OCI-LY7 (cell line): ENCODE measurements at regions of chr6 and their contacts with region 1.

Region 1: DNA sequence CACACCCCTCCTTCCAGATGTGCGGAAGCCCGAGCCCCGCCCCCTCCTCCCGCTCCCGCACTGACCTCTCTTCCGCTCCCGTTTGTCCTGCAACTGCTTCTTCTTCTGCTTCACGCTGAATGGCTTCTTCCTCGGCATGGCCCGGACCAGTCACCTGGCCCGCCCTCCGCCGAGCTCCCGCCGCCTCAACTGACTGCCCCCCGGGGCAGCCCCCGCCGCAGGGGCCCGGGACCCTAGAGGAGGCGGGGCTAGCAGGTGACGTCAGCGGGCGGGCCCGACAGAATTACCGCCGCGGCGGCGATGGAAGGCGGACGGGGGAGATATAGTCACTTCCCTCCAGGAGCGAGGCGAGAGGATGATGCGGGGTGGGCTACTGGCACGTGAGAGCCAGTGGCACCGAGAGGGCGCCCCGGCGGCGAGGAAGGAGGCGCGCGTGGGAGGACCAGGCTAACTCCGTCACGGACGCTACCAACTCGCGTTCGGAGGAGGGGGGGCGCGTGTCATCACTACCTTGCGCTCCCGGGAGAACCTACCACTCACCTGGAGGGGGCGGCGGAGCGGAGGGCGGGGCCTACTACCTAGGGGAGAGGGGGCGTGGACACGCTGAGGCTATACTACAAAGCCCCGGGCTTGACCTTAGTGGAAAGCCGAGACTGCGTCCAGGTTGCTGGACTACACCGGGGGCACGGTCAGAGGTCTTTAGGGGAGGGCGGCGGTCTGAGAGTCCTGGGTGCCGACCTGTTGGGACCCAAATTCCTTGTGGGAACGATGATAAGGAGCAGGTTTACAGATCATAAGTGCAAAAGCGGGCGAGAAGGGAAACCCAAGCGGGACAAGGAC is at the start of gene GNL1:
- DNase-seq: peak; percentile 97
- H3K4me3 ChIP-seq: peak within 1 kb of the TSS; percentile 84
- H3K27ac ChIP-seq: peak within 1 kb of the TSS; percentile 89
- H3K4me1 ChIP-seq: peaks cover 18% of the 10 kb centered on the region
- CTCF ChIP-seq: no peak
- total RNA-seq, gene GNL1: 51.2 and 66.4 TPM in 2 replicates

Region 2: GRCh38 chr6:30386166-30386565 is 170.1 kb before region 1 on chr6:
- CTCF ChIA-PET with region 1: no interaction called
- POLR2A ChIA-PET with region 1: no interaction called
- intact Hi-C with region 1: no loop called
- DNase-seq: no peak
- H3K4me3 ChIP-seq: no peak overlapping the region
- H3K27ac ChIP-seq: no peak overlapping the region
- H3K4me1 ChIP-seq: no peaks in the 10 kb centered on the region
- CTCF ChIP-seq: no peak

Region 3: GRCh38 chr6:30571075-30571768 is 14.9 kb after region 1 on chr6 and contains the start of gene ABCF1:
- CTCF ChIA-PET with region 1: no interaction called
- POLR2A ChIA-PET with region 1: interaction called, 11 read pairs
- intact Hi-C with region 1: loop called (anchors 2 kb)
- DNase-seq: peak; percentile 99
- H3K4me3 ChIP-seq: peak within 1 kb of the TSS; percentile 93
- H3K27ac ChIP-seq: peak within 1 kb of the TSS; percentile 74
- H3K4me1 ChIP-seq: peaks cover 40% of the 10 kb centered on the region
- CTCF ChIP-seq: no peak
- total RNA-seq, gene ABCF1: 53.0 and 126 TPM in 2 replicates

Region 4: GRCh38 chr6:30742316-30743098 is 186.2 kb after region 1 on chr6 and contains the start of gene FLOT1:
- CTCF ChIA-PET with region 1: no interaction called
- POLR2A ChIA-PET with region 1: no interaction called
- intact Hi-C with region 1: loop called (anchors 5 kb)
- DNase-seq: peak; percentile 84
- H3K4me3 ChIP-seq: peak within 1 kb of the TSS; percentile 91
- H3K27ac ChIP-seq: peak within 1 kb of the TSS; percentile 50
- H3K4me1 ChIP-seq: peaks cover 31% of the 10 kb centered on the region
- CTCF ChIP-seq: 0 out of 2 replicates have a peak, but pooled peaks have one; percentile 23
- total RNA-seq, gene FLOT1: 66.7 and 70.7 TPM in 2 replicates

Region 5: GRCh38 chr6:30907758-30908591 is 351.7 kb after region 1 on chr6 and contains the start of gene GTF2H4:
- CTCF ChIA-PET with region 1: no interaction called
- POLR2A ChIA-PET with region 1: no interaction called
- intact Hi-C with region 1: loop called (anchors 5 kb)
- DNase-seq: peak; percentile 98
- H3K4me3 ChIP-seq: peak within 1 kb of the TSS; percentile 91
- H3K27ac ChIP-seq: peak within 1 kb of the TSS; percentile 15
- H3K4me1 ChIP-seq: peaks cover 17% of the 10 kb centered on the region
- CTCF ChIP-seq: no peak
- total RNA-seq, gene GTF2H4: 30.5 and 38.4 TPM in 2 replicates